Activated CD4-positive, alpha-beta T cell treated with anti-CD3 and anti-CD28 coated beads, Interleukin-2, amount 10 ng/mL, durations not matched to agents 7 days and 5 days (primary cell): ENCODE measurements at regions of chr10 and their contacts with region 1.

Region 1: DNA sequence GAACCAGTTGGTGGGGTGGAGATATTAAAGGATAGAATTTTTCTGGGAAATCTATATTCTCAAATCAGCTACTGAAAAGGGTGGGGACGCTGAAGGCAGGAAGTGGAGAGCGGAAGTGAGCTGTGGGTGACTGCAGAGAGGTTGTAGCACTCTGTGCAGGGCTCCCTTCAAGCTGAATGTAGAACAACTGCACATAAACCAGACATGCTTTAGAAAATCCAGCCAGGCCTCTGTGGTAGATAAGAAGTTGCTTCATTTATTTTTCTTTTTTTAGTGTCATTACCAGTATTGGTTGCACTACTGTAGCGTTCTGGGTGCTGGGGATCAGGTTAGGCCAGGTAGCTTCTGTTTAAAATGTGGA is 127.8 kb downstream of the CELF2 start:
- DNase-seq: peak; percentile 84
- H3K4me3 Mint-ChIP-seq: peak overlapping the region; percentile 64
- H3K27ac Mint-ChIP-seq: peak overlapping the region; percentile 99
- H3K4me1 Mint-ChIP-seq: peaks cover 93% of the 10 kb centered on the region
- H3K27me3 Mint-ChIP-seq: no peaks in the 10 kb centered on the region

Region 2: DNA sequence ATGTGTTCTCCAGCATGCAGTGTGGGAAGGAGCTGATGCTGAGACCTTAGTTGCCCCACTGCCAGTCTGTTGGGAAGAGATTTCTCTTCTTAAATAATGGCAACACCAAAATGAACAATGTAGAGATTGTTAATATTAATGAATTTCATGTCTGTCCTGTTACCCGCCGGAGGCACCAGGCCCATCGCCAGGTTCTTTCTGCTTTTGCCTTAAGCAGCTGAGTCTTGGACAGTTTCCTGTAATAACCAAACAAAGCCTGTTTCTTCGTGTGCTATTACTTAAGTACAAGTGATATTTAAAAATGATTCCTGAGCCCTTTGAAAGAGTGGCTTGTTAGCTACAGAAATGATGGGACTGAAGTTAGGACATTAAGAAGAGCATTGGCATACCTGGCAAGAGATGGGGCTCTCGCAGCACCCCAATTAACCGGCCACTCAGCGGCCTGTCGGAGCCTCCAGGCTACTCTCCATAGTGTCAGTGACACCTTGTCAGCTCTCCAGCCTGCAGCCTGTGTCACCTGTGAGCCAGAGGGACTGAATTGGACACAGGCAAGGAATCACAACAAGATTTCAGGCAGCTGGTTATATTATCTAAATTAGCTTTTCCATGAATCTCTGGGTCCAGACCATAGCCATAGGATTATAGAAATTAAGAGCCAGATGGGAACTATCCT is 14.2 kb after region 1 on chr10:
- CTCF ChIA-PET with region 1: interaction called, 15 read pairs
- POLR2A ChIA-PET with region 1: interaction called, 29 read pairs
- DNase-seq: no peak
- H3K4me3 Mint-ChIP-seq: no peak overlapping the region
- H3K27ac Mint-ChIP-seq: no peak overlapping the region
- H3K4me1 Mint-ChIP-seq: peaks cover 81% of the 10 kb centered on the region
- H3K27me3 Mint-ChIP-seq: no peaks in the 10 kb centered on the region

Region 3: DNA sequence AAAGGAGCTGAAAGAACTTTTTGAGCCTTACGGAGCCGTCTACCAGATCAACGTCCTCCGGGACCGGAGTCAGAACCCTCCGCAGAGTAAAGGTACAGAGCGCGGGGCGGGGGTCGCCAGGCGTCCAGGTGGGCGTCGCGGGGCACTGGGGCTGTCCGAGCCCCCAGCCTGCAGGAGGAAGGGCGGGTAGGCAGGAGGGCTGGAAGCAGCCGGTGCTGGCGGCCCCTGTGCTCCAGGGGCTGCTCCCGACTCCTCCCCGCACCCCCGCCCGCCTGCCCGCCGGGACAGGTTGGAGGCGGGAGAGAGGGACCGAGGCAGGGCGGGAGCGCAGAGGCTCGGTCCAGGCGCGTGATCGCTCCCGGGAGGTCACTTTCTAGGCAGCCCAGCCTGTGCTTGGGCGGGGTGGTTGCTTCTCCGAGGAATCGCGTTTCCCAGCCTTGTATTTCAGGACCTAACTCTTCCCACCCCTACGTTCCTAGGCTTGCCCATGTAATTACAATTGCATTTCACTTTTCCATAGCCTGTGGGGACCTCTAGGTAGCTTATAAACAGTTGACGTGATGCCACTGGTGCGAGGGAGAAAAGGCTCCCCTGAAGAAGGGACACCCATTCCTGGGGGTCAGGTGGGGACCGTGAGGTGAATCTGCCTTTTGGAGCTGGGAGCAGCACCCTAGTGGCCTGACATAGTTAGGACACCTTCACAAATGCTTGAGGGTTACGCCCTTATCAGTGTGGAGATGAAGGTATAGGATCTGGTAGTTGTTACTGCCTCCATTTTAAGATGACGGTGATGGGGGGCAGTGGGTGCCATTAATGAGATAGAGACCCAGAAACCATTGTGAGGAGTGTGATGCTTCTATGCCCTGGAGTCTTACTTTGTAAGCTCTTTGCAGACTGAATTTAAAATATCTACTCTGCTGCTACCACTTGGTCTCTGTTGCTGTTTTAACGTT is 20.4 kb after region 1 on chr10:
- CTCF ChIA-PET with region 1: interaction called, 15 read pairs
- POLR2A ChIA-PET with region 1: interaction called, 29 read pairs
- DNase-seq: peak; percentile 84
- H3K4me3 Mint-ChIP-seq: no peak overlapping the region
- H3K27ac Mint-ChIP-seq: peak overlapping the region; percentile 99
- H3K4me1 Mint-ChIP-seq: peaks cover 36% of the 10 kb centered on the region
- H3K27me3 Mint-ChIP-seq: no peaks in the 10 kb centered on the region

Region 4: DNA sequence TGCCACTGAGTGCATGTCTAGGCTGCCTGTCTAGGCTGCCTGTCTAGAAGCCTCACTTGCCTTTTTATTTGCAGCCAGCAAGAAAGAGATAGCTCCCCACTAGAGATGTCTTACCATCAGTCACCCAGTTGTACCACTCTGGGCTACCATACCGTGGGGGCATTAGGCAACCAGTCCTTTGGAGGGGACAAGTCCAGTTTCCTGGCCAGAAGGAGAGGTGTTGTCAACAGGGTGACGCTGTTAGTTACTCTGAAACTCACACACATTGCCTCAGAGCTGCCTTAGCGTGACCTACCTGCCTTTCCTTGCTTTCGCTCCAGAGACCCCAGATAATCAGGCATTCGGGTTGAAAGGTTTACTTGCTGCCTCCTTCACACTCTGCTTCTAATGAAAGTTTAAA is 27.6 kb after region 1 on chr10:
- CTCF ChIA-PET with region 1: interaction called, 10 read pairs
- POLR2A ChIA-PET with region 1: interaction called, 3 read pairs
- DNase-seq: no peak
- H3K4me3 Mint-ChIP-seq: no peak overlapping the region
- H3K27ac Mint-ChIP-seq: peak overlapping the region; percentile 91
- H3K4me1 Mint-ChIP-seq: peaks cover 58% of the 10 kb centered on the region
- H3K27me3 Mint-ChIP-seq: no peaks in the 10 kb centered on the region

Region 5: GRCh38 chr10:11178606-11179515 is 33.4 kb after region 1 on chr10:
- CTCF ChIA-PET with region 1: interaction called, 10 read pairs
- POLR2A ChIA-PET with region 1: interaction called, 3 read pairs
- DNase-seq: peak; percentile 93
- H3K4me3 Mint-ChIP-seq: no peak overlapping the region
- H3K27ac Mint-ChIP-seq: peak overlapping the region; percentile 91
- H3K4me1 Mint-ChIP-seq: peaks cover 98% of the 10 kb centered on the region
- H3K27me3 Mint-ChIP-seq: no peaks in the 10 kb centered on the region